Sciatic nerve (tissue), 2 donors: ENCODE measurements at regions of chr17 and their contacts with region 1.

Region 1: GRCh38 chr17:11221721-11222120 is 19.3 kb upstream of the SHISA6 start:
- DNase-seq: no peak
- ATAC-seq: no peak

Region 2: GRCh38 chr17:10398352-10398751 is 823.4 kb before region 1 on chr17:
- intact Hi-C with region 1: no loop called
- DNase-seq: no peak
- ATAC-seq: no peak

Region 3: DNA sequence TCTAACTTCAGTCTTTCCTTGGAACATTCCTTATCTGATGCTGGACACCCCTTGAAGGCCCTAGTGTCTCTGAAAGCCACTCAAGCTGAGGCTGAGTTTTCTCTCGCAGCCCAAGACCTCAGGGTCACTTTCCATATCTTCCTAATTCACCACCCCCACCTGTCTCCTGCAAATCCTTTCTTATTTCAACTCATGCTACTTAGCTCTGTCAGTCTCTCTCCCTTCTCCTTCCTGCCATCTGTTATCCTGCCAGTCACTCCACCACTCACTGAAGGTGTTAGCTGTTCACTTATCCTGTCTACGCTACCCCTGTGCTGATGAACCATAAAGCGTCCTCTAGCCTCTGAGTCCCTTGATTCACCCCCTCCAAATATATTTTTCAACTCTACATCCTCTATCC is 124.6 kb before region 1 on chr17:
- intact Hi-C with region 1: no loop called
- DNase-seq: no peak
- ATAC-seq: no peak

Region 4: GRCh38 chr17:11459861-11460331 is 238.2 kb after region 1 on chr17:
- intact Hi-C with region 1: loop called (anchors 5 kb)
- DNase-seq: no peak
- ATAC-seq: peak; percentile 48